ENCODE measurements at regions of chr2 and their contacts with region 1.

Region 1: DNA sequence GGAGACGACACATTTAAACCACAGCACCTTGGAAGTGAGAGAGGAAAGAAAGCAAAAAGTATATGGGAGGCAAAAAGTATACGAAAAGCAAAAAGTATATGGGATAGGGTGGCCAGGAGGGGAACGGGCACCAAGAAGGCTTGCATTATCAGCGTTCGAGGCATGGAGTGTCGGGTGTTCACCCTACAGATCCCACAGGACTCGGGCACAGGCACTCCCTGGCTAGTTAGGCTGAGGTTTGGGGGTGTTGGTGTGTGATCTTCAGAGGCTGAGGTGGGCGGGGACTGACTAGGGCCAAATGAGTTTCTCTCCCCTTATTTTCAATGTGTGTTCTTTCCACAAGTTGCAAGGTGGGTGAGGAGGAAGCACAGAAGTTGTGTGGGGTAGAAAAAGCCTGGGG is 86.6 kb downstream of the EVA1A start:
- DNase-seq: no peak
- H3K4me3 ChIP-seq: no peak overlapping the region
- H3K27ac ChIP-seq: no peak overlapping the region
- H3K4me1 ChIP-seq: no peaks in the 10 kb centered on the region
- H3K27me3 ChIP-seq: no peaks in the 10 kb centered on the region
- CTCF ChIP-seq: no peak
- POLR2A ChIP-seq: no peak

Region 2: GRCh38 chr2:75491129-75491753 is 17.1 kb after region 1 on chr2:
- intact Hi-C with region 1: no loop called
- DNase-seq: no peak
- H3K4me3 ChIP-seq: no peak overlapping the region
- H3K27ac ChIP-seq: no peak overlapping the region
- H3K4me1 ChIP-seq: no peaks in the 10 kb centered on the region
- H3K27me3 ChIP-seq: no peaks in the 10 kb centered on the region
- CTCF ChIP-seq: no peak
- POLR2A ChIP-seq: no peak

Region 3: GRCh38 chr2:76921006-76921405 is 1446.9 kb after region 1 on chr2:
- intact Hi-C with region 1: loop called (anchors 5 kb)
- DNase-seq: no peak
- H3K4me3 ChIP-seq: no peak overlapping the region
- H3K27ac ChIP-seq: no peak overlapping the region
- H3K4me1 ChIP-seq: no peaks in the 10 kb centered on the region
- H3K27me3 ChIP-seq: no peaks in the 10 kb centered on the region
- CTCF ChIP-seq: no peak
- POLR2A ChIP-seq: no peak